ENCODE measurements at regions of chr2 and their contacts with region 1.

Region 1: DNA sequence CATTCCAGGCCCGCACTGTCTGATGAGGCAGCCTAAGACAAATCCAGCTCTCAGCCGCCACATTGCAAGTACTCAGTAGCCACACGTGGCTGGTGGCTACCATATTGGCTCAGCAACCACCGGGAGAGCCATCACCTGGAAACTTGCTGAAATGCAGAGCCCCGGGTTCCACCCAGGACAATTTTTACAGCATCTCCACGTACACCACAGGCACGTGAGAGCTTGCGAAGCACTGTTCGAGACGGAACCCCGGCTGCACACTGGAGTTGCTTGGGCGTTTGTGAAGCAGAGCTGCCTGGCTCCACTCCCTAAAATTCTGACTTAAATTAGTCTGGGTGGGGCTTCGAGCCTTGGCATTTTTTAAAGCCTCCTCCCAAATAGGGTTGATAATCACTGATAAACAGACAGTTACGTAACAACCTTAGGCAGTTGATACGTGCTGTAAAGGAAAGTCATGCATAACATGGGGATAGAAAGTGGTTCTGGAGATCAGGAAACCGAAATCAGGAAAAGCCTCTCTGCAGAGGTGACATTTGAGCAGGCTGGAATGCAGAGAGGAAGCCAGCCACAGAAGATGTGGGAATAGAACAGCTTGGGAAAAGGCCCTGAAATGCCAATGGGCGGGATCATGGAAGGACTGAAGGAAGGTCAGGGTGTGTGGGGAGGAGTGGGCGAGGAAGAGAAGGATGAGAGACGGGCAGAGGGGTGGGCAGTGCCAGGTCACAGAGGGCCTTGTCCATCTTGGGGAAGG is 6.2 kb downstream of the ASAP2 start:
- DNase-seq: no peak
- ATAC-seq: peak; percentile 18

Region 2: GRCh38 chr2:9333591-9334171 is 120.8 kb after region 1 on chr2:
- intact Hi-C with region 1: loop called (anchors 10 kb)
- DNase-seq: peak; percentile 65
- ATAC-seq: peak; percentile 76

Measured in sciatic nerve (tissue), 2 donors.